ENCODE measurements at regions of chr14 and their contacts with region 1.

Region 1: GRCh38 chr14:61252369-61253063 is 28.6 kb downstream of the TMEM30B start:
- DNase-seq: peak; percentile 27
- ATAC-seq: peak; percentile 99
- H3K4me3 ChIP-seq: no peak overlapping the region
- H3K27ac ChIP-seq: no peak overlapping the region
- H3K4me1 ChIP-seq: no peaks in the 10 kb centered on the region
- H3K27me3 ChIP-seq: no peaks in the 10 kb centered on the region
- CTCF ChIP-seq: peak; percentile 83 to 90 (median 86)
- EP300 ChIP-seq: no peak
- POLR2A ChIP-seq: no peak
- RAD21 ChIP-seq: peak; percentile 99

Region 2: GRCh38 chr14:60622917-60623257 is 629.6 kb before region 1 on chr14:
- CTCF ChIA-PET with region 1: interaction called, 72 read pairs
- POLR2A ChIA-PET with region 1: interaction called, 5 read pairs
- RAD21 ChIA-PET with region 1: interaction called, 36 read pairs
- SMC1A ChIA-PET with region 1: interaction called, 34 read pairs
- in situ Hi-C with region 1: loop called (anchors 5 kb)
- intact Hi-C with region 1: loop called (anchors 1 kb)
- DNase-seq: no peak
- ATAC-seq: no peak
- H3K4me3 ChIP-seq: no peak overlapping the region
- H3K27ac ChIP-seq: no peak overlapping the region
- H3K4me1 ChIP-seq: no peaks in the 10 kb centered on the region
- H3K27me3 ChIP-seq: no peaks in the 10 kb centered on the region
- CTCF ChIP-seq: no peak
- EP300 ChIP-seq: no peak
- POLR2A ChIP-seq: no peak
- RAD21 ChIP-seq: no peak

Region 3: DNA sequence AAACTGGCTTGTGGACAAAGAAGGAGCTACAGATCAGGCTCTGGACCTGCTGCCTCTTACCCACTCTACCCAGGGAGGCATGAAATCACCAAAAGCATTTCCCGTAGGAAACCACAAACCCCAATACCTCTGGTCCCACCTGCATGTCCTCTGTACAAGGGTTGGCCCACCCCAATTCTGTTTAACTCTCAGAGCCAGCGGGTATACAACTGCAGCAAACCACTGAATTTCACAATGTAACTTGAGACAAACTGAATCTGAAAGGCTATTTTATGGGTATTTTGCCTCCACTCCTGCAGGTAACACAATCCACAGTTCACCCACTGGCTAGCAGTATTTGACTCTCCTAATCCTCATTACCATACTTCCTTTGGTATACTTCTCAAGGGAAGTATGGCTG is 619.7 kb before region 1 on chr14:
- CTCF ChIA-PET with region 1: interaction called, 4 read pairs
- POLR2A ChIA-PET with region 1: no interaction called
- RAD21 ChIA-PET with region 1: interaction called, 4 read pairs
- SMC1A ChIA-PET with region 1: interaction called, 4 read pairs
- in situ Hi-C with region 1: loop called (anchors 5 kb)
- intact Hi-C with region 1: no loop called
- DNase-seq: peak; percentile 30
- ATAC-seq: peak; percentile 84
- H3K4me3 ChIP-seq: no peak overlapping the region
- H3K27ac ChIP-seq: no peak overlapping the region
- H3K4me1 ChIP-seq: peaks cover 8% of the 10 kb centered on the region; the same call in 1 of the 2 replicates
- H3K27me3 ChIP-seq: peaks cover 2 to 18% of the 10 kb centered on the region in 2 experiments
- CTCF ChIP-seq: no peak
- EP300 ChIP-seq: no peak
- POLR2A ChIP-seq: no peak
- RAD21 ChIP-seq: no peak

Region 4: GRCh38 chr14:60724137-60724619 is 528.3 kb before region 1 on chr14 and contains the start of gene SIX4:
- CTCF ChIA-PET with region 1: interaction called, 4 read pairs
- POLR2A ChIA-PET with region 1: no interaction called
- RAD21 ChIA-PET with region 1: no interaction called
- SMC1A ChIA-PET with region 1: no interaction called
- in situ Hi-C with region 1: no loop called
- intact Hi-C with region 1: loop called (anchors 10 kb)
- DNase-seq: no peak
- ATAC-seq: peak; percentile 66
- H3K4me3 ChIP-seq: peak within 1 kb of the TSS; percentile 72
- H3K27ac ChIP-seq: no peak within 1 kb of the TSS
- H3K4me1 ChIP-seq: no peaks in the 10 kb centered on the region
- H3K27me3 ChIP-seq: peaks cover 16 to 28% of the 10 kb centered on the region in 2 experiments
- CTCF ChIP-seq: no peak
- EP300 ChIP-seq: no peak
- POLR2A ChIP-seq: no peak
- RAD21 ChIP-seq: no peak
- polyA plus RNA-seq, gene SIX4: not detected

Region 5: GRCh38 chr14:61215222-61216020 is 37.1 kb before region 1 on chr14:
- CTCF ChIA-PET with region 1: no interaction called
- POLR2A ChIA-PET with region 1: no interaction called
- RAD21 ChIA-PET with region 1: no interaction called
- SMC1A ChIA-PET with region 1: no interaction called
- in situ Hi-C with region 1: no loop called
- intact Hi-C with region 1: no loop called
- DNase-seq: no peak
- ATAC-seq: no peak
- H3K4me3 ChIP-seq: no peak overlapping the region
- H3K27ac ChIP-seq: no peak overlapping the region
- H3K4me1 ChIP-seq: no peaks in the 10 kb centered on the region
- H3K27me3 ChIP-seq: peaks cover 0 to 5% of the 10 kb centered on the region in 2 experiments; a peak in 2 of 4 replicates
- CTCF ChIP-seq: no peak
- EP300 ChIP-seq: no peak
- POLR2A ChIP-seq: no peak
- RAD21 ChIP-seq: no peak

Region 6: DNA sequence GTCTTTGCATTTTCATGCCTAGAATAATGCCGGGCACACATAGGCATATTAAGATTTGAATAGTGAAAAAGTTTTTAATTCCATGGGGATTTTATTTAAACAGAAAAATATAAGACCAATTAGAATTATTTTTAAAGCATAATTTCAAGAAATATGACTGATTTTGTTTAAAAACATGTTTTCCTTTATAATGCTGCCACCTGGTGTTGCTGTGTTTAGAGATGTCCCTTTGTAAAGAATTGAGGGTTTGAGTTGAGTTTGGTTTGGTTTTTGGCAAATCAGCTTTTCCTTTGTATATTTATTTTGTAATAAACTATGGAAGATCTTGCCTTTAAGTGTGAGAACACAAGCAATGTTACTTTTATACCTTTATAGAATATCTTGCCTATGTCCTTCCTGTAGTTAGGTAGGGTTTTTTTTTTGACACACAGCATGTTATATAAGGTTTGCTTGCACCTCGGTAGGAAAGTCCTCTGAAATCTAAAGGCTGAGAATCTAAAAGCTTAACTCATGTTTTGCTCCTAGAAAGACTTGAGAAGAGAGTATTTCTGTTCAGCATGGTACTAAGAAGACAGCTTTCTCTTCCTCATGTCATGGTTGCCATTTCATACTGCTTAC is 478.3 kb after region 1 on chr14:
- CTCF ChIA-PET with region 1: no interaction called
- POLR2A ChIA-PET with region 1: no interaction called
- RAD21 ChIA-PET with region 1: no interaction called
- SMC1A ChIA-PET with region 1: no interaction called
- in situ Hi-C with region 1: no loop called
- intact Hi-C with region 1: no loop called
- DNase-seq: no peak
- ATAC-seq: 0 out of 3 replicates have a peak, but pooled peaks have one; percentile 25
- H3K4me3 ChIP-seq: no peak overlapping the region
- H3K27ac ChIP-seq: no peak overlapping the region
- H3K4me1 ChIP-seq: no peaks in the 10 kb centered on the region
- H3K27me3 ChIP-seq: no peaks in the 10 kb centered on the region
- CTCF ChIP-seq: peak in 1 of 3 experiments; percentile 25; a peak in 2 of 6 replicates
- EP300 ChIP-seq: no peak
- POLR2A ChIP-seq: no peak
- RAD21 ChIP-seq: peak; percentile 62

Measured in GM12878 (cell line).